ENCODE measurements at regions of chr9 and their contacts with region 1.

Region 1: GRCh38 chr9:131762356-131762932 is 22.6 kb upstream of the RAPGEF1 start:
- DNase-seq: peak; percentile 57
- H3K4me3 ChIP-seq: no peak overlapping the region
- H3K27ac ChIP-seq: no peak overlapping the region
- H3K4me1 ChIP-seq: no peaks in the 10 kb centered on the region
- H3K27me3 ChIP-seq: no peaks in the 10 kb centered on the region
- CTCF ChIP-seq: peak; percentile 89 to 96 (median 93)
- POLR2A ChIP-seq: no peak

Region 2: GRCh38 chr9:131839281-131840084 is 77.0 kb after region 1 on chr9:
- intact Hi-C with region 1: no loop called
- DNase-seq: no peak
- H3K4me3 ChIP-seq: no peak overlapping the region
- H3K27ac ChIP-seq: no peak overlapping the region
- H3K4me1 ChIP-seq: no peaks in the 10 kb centered on the region
- H3K27me3 ChIP-seq: no peaks in the 10 kb centered on the region
- CTCF ChIP-seq: no peak
- POLR2A ChIP-seq: no peak

Region 3: GRCh38 chr9:132235946-132236661 is 473.7 kb after region 1 on chr9:
- intact Hi-C with region 1: loop called (anchors 5 kb)
- DNase-seq: peak; percentile 84
- H3K4me3 ChIP-seq: no peak overlapping the region
- H3K27ac ChIP-seq: no peak overlapping the region
- H3K4me1 ChIP-seq: no peaks in the 10 kb centered on the region
- H3K27me3 ChIP-seq: no peaks in the 10 kb centered on the region
- CTCF ChIP-seq: peak; percentile 84 to 92 (median 88)
- POLR2A ChIP-seq: no peak

Region 4: GRCh38 chr9:132250324-132251262 is 488.1 kb after region 1 on chr9:
- intact Hi-C with region 1: loop called (anchors 5 kb)
- DNase-seq: no peak
- H3K4me3 ChIP-seq: no peak overlapping the region
- H3K27ac ChIP-seq: no peak overlapping the region
- H3K4me1 ChIP-seq: no peaks in the 10 kb centered on the region
- H3K27me3 ChIP-seq: no peaks in the 10 kb centered on the region
- CTCF ChIP-seq: no peak
- POLR2A ChIP-seq: no peak

Region 5: GRCh38 chr9:132268725-132269352 is 506.4 kb after region 1 on chr9:
- intact Hi-C with region 1: loop called (anchors 5 kb)
- DNase-seq: peak; percentile 72
- H3K4me3 ChIP-seq: no peak overlapping the region
- H3K27ac ChIP-seq: peak overlapping the region in 1 of 2 donors; percentile 15
- H3K4me1 ChIP-seq: no peaks in the 10 kb centered on the region
- H3K27me3 ChIP-seq: no peaks in the 10 kb centered on the region
- CTCF ChIP-seq: peak; percentile 70 to 86 (median 76)
- POLR2A ChIP-seq: no peak